ENCODE measurements at regions of chr15 and their contacts with region 1.

Region 1: DNA sequence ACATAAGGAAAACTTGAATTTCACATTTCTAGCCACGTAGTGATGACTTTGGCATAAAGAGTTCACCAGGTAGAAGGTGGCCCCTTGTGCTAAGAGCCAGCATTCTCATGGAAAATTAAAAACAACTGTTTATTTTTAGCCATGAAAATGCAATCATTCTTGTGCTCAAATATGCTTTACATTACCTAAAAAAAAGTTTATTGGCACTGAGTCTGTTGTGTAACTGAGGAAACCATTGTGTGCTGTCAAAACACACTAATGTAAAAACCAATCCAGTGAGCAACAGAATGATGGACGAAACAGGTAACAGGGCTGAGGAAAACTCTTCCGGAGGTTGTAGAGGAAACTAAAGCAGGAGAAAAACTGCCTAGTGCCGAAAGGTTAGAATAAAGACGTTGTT is 287.0 kb upstream of the TMC3 start:
- DNase-seq: no peak
- H3K4me3 ChIP-seq: no peak overlapping the region
- H3K27ac ChIP-seq: no peak overlapping the region
- H3K4me1 ChIP-seq: no peaks in the 10 kb centered on the region
- H3K27me3 ChIP-seq: peaks cover 5% of the 10 kb centered on the region; the same call in 1 of the 2 replicates
- CTCF ChIP-seq: no peak

Region 2: DNA sequence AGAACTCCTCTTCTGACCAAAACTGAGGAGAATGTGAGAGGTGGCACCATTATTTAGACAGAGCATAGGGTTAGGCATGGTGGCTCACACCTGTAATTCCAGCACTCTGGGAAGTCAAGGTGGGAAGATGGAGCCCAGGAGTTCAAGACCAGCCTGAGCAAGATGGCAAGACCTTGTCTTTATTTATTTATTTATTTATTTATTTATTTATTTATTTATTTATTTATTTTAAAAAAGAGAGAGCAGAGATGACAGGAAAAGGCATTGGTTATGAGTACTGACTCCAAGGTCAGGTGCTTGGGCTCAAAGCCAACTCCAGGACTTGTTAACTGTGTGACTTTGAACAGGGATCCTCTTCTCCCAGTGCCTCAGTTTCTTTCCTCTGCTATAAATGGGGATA is 167.2 kb after region 1 on chr15:
- CTCF ChIA-PET with region 1: interaction called, 24 read pairs
- POLR2A ChIA-PET with region 1: no interaction called
- intact Hi-C with region 1: no loop called
- DNase-seq: no peak
- H3K4me3 ChIP-seq: no peak overlapping the region
- H3K27ac ChIP-seq: no peak overlapping the region
- H3K4me1 ChIP-seq: no peaks in the 10 kb centered on the region
- H3K27me3 ChIP-seq: no peaks in the 10 kb centered on the region
- CTCF ChIP-seq: no peak